ENCODE measurements at regions of chr3 and their contacts with region 1.

Region 1: GRCh38 chr3:127970966-127971592 is 56.0 kb downstream of the KBTBD12 start:
- DNase-seq: peak in 2 of 4 experiments; percentile 37 to 38
- ATAC-seq: peak; percentile 87
- H3K4me3 ChIP-seq: no peak overlapping the region
- H3K27ac ChIP-seq: no peak overlapping the region
- H3K4me1 ChIP-seq: no peaks in the 10 kb centered on the region
- H3K27me3 ChIP-seq: no peaks in the 10 kb centered on the region; a peak in 1 of 5 replicates
- CTCF ChIP-seq: peak; percentile 59 to 73 (median 67)
- EP300 ChIP-seq: no peak
- POLR2A ChIP-seq: no peak
- RAD21 ChIP-seq: peak; percentile 59 to 78

Region 2: DNA sequence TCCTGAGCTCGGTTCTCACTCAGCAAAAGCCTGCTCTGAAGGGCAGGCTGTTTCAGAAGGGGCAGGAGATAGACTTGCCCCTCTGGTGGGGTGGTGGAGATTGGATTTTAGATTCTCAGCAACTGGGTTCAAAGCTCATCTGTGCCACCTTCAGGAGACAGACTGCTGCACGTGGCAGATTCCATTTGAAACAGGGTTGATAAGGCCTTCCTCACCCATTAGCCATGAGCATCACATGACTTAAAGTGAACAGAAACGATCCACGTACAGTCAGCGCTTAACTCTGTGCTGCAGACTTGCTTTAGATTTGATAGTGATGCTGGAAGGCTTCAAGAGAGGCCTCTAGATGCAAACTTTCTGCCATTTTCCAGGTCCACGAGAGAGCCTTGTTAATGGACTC is 113.7 kb before region 1 on chr3:
- CTCF ChIA-PET with region 1: interaction called, 4 read pairs
- POLR2A ChIA-PET with region 1: no interaction called
- in situ Hi-C with region 1: no loop called
- intact Hi-C with region 1: loop called (anchors 1 kb)
- DNase-seq: no peak
- ATAC-seq: no peak
- H3K4me3 ChIP-seq: no peak overlapping the region
- H3K27ac ChIP-seq: no peak overlapping the region
- H3K4me1 ChIP-seq: no peaks in the 10 kb centered on the region
- H3K27me3 ChIP-seq: peaks cover 4 to 27% of the 10 kb centered on the region in 2 experiments; a peak in 3 of 5 replicates
- CTCF ChIP-seq: no peak
- EP300 ChIP-seq: no peak
- POLR2A ChIP-seq: no peak
- RAD21 ChIP-seq: no peak